B cell (primary cell): ENCODE measurements at regions of chr20 and their contacts with region 1.

Region 1: GRCh38 chr20:15767999-15768741 is 805.1 kb downstream of the KIF16B start:
- DNase-seq: peak; percentile 32
- ATAC-seq: no peak
- H3K4me3 ChIP-seq: no peak overlapping the region
- H3K4me3 Mint-ChIP-seq: no peak overlapping the region
- H3K27ac ChIP-seq: no peak overlapping the region
- H3K27ac Mint-ChIP-seq: no peak overlapping the region
- H3K4me1 ChIP-seq: peaks cover 0 to 5% of the 10 kb centered on the region in 2 donors
- H3K4me1 Mint-ChIP-seq: peaks cover 9% of the 10 kb centered on the region
- H3K27me3 ChIP-seq: no peaks in the 10 kb centered on the region
- H3K27me3 Mint-ChIP-seq: no peaks in the 10 kb centered on the region
- CTCF ChIP-seq: no peak

Region 2: DNA sequence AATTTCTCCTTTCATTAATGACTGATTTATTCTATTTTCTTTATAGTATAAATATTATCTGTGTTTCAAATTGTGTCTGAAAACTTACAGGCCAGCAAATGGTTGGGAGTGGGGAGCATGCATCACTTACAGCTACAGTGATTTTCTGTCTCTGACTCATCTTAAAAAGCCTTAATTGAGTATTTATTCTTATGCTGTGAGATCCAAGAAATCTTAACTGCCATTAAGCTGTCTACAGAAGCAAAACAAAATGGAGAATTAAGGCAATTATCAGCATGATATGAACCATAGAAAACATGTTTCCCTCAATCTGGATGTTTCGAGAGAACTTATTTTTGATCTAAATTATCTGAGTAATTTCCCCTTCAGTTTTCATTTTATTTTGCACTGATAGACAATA is 26.1 kb before region 1 on chr20:
- CTCF ChIA-PET with region 1: no interaction called
- POLR2A ChIA-PET with region 1: no interaction called
- intact Hi-C with region 1: loop called (anchors 1 kb)
- DNase-seq: no peak
- ATAC-seq: no peak
- H3K4me3 ChIP-seq: no peak overlapping the region
- H3K4me3 Mint-ChIP-seq: no peak overlapping the region
- H3K27ac ChIP-seq: no peak overlapping the region
- H3K27ac Mint-ChIP-seq: no peak overlapping the region
- H3K4me1 ChIP-seq: no peaks in the 10 kb centered on the region
- H3K4me1 Mint-ChIP-seq: no peaks in the 10 kb centered on the region
- H3K27me3 ChIP-seq: peaks cover 0 to 3% (median 0%) of the 10 kb centered on the region in 4 experiments
- H3K27me3 Mint-ChIP-seq: no peaks in the 10 kb centered on the region
- CTCF ChIP-seq: no peak

Region 3: DNA sequence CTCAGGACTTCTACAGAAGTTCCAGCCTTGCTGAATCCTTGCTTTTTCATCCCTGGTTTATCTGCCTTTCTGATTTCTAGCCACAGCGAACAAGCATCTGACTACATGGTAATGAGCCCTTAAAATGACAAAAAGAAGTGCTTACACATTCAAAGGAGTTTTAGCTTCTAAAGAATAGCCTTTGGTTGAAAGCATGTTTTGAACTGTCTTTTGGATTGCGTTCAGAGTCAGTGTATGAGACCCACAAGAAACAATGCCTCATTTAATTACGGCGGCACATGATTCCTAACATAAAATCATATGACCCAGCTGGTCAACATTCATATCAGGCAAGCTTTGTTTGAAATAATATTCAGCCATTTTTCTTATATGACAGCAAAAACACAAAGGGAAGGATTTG is 20.9 kb after region 1 on chr20:
- CTCF ChIA-PET with region 1: no interaction called
- POLR2A ChIA-PET with region 1: no interaction called
- intact Hi-C with region 1: no loop called
- DNase-seq: no peak
- ATAC-seq: no peak
- H3K4me3 ChIP-seq: no peak overlapping the region
- H3K4me3 Mint-ChIP-seq: peak overlapping the region; percentile 24
- H3K27ac ChIP-seq: no peak overlapping the region
- H3K27ac Mint-ChIP-seq: no peak overlapping the region
- H3K4me1 ChIP-seq: no peaks in the 10 kb centered on the region
- H3K4me1 Mint-ChIP-seq: peaks cover 16% of the 10 kb centered on the region
- H3K27me3 ChIP-seq: peaks cover 0 to 3% (median 0%) of the 10 kb centered on the region in 4 experiments
- H3K27me3 Mint-ChIP-seq: no peaks in the 10 kb centered on the region
- CTCF ChIP-seq: no peak

Region 4: GRCh38 chr20:15834857-15835256 is 66.7 kb after region 1 on chr20:
- CTCF ChIA-PET with region 1: no interaction called
- POLR2A ChIA-PET with region 1: no interaction called
- intact Hi-C with region 1: no loop called
- DNase-seq: no peak
- ATAC-seq: no peak
- H3K4me3 ChIP-seq: no peak overlapping the region
- H3K4me3 Mint-ChIP-seq: no peak overlapping the region
- H3K27ac ChIP-seq: no peak overlapping the region
- H3K27ac Mint-ChIP-seq: no peak overlapping the region
- H3K4me1 ChIP-seq: no peaks in the 10 kb centered on the region
- H3K4me1 Mint-ChIP-seq: peaks cover 4% of the 10 kb centered on the region
- H3K27me3 ChIP-seq: peaks cover 0 to 8% (median 0%) of the 10 kb centered on the region in 4 experiments
- H3K27me3 Mint-ChIP-seq: peaks cover 27% of the 10 kb centered on the region
- CTCF ChIP-seq: no peak